GM12878 (cell line): ENCODE measurements at regions of chr4 and their contacts with region 1.

Region 1: DNA sequence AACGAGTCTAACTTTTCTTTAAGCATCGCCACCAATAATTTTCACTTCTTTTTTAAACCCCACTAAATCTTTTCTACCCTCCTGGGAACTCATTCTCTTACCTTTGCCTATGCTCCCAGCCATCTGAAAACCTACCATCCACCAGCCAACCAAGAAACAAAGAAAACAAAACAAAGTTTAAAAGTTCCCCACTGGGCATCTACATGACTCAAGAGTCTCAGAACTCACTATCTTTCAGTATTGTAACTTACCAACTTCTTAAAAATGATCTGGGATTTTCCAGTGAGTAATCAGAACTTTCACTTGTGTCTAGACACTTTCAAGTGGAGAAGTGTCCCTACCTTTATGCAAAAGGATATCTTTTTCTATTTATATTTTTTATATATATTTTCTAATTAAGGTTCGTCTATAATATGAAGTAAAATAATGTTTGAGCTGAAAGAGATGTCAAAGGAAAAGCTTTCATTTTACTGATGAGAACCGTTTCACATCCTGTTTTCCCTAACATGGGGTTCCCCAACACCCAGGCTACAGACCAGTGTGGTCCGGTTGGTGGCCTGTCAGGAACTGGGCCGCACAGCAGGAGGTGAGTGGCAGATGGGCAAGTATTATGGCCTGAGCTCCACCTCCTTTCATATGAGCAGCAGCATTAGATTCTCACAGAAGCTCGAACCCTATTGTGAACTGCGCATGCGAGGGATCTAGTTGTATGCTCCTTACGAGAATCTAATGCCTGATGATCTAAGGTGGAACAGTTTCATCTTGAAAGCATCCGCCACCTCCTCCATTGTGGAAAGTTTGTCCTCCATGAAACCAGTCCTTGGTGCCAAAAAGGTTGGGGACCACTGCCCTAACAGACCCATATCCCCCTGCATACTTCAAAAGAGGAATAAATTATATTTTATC is 9.8 kb upstream of the TIGD2 start:
- DNase-seq: peak; percentile 86
- ATAC-seq: peak; percentile 98
- H3K4me3 ChIP-seq: peak overlapping the region; percentile 10; the same call in 1 of the 2 replicates
- H3K27ac ChIP-seq: peak overlapping the region; percentile 95
- H3K4me1 ChIP-seq: peaks cover 7% of the 10 kb centered on the region
- H3K27me3 ChIP-seq: no peaks in the 10 kb centered on the region
- CTCF ChIP-seq: no peak
- EP300 ChIP-seq: peak; percentile 48 to 53; a peak in 1 of 4 replicates
- POLR2A ChIP-seq: no peak
- RAD21 ChIP-seq: no peak

Region 2: GRCh38 chr4:89009115-89009514 is 92.4 kb before region 1 on chr4:
- CTCF ChIA-PET with region 1: no interaction called
- POLR2A ChIA-PET with region 1: no interaction called
- RAD21 ChIA-PET with region 1: no interaction called
- SMC1A ChIA-PET with region 1: no interaction called
- in situ Hi-C with region 1: no loop called
- intact Hi-C with region 1: no loop called
- DNase-seq: no peak
- ATAC-seq: no peak
- H3K4me3 ChIP-seq: no peak overlapping the region
- H3K27ac ChIP-seq: no peak overlapping the region
- H3K4me1 ChIP-seq: no peaks in the 10 kb centered on the region
- H3K27me3 ChIP-seq: no peaks in the 10 kb centered on the region
- CTCF ChIP-seq: no peak
- EP300 ChIP-seq: no peak
- POLR2A ChIP-seq: no peak
- RAD21 ChIP-seq: no peak

Region 3: GRCh38 chr4:89069481-89069880 is 32.0 kb before region 1 on chr4:
- CTCF ChIA-PET with region 1: interaction called, 9 read pairs
- POLR2A ChIA-PET with region 1: interaction called, 6 read pairs
- RAD21 ChIA-PET with region 1: interaction called, 10 read pairs
- SMC1A ChIA-PET with region 1: interaction called, 28 read pairs
- in situ Hi-C with region 1: no loop called
- intact Hi-C with region 1: no loop called
- DNase-seq: peak; percentile 40
- ATAC-seq: peak; percentile 89
- H3K4me3 ChIP-seq: no peak overlapping the region
- H3K27ac ChIP-seq: no peak overlapping the region
- H3K4me1 ChIP-seq: no peaks in the 10 kb centered on the region; the same call in 1 of the 2 replicates
- H3K27me3 ChIP-seq: no peaks in the 10 kb centered on the region
- CTCF ChIP-seq: no peak
- EP300 ChIP-seq: no peak
- POLR2A ChIP-seq: no peak
- RAD21 ChIP-seq: no peak

Region 4: DNA sequence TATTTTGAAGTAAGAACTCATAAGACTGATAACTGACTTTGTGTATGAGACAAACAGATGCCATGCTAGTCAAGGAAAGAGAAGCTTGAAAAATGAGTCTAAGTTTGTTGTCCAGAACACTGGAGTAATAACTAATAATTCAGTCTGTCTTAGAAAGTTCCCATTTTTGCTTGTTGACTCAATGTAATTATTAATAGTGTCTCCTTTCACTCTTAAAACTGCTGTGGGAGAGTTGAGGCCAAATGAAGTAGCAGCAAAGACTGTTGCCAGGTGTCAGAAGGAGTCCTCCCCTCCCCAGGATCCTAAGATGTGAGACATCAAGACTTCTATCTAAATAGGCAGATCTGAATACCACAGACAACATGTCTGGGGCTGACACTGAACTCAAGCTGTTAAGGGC is 23.7 kb before region 1 on chr4:
- CTCF ChIA-PET with region 1: interaction called, 3 read pairs
- POLR2A ChIA-PET with region 1: no interaction called
- RAD21 ChIA-PET with region 1: interaction called, 3 read pairs
- SMC1A ChIA-PET with region 1: interaction called, 3 read pairs
- in situ Hi-C with region 1: no loop called
- intact Hi-C with region 1: loop called (anchors 2 kb)
- DNase-seq: no peak
- ATAC-seq: no peak
- H3K4me3 ChIP-seq: no peak overlapping the region
- H3K27ac ChIP-seq: no peak overlapping the region
- H3K4me1 ChIP-seq: peaks cover 11% of the 10 kb centered on the region
- H3K27me3 ChIP-seq: no peaks in the 10 kb centered on the region
- CTCF ChIP-seq: no peak
- EP300 ChIP-seq: no peak
- POLR2A ChIP-seq: no peak
- RAD21 ChIP-seq: no peak